WTC11 (cell line): ENCODE measurements at regions of chr15 and their contacts with region 1.

Region 1: GRCh38 chr15:73697033-73697467 is 12.9 kb downstream of the CD276 start:
- DNase-seq: peak; percentile 54
- ATAC-seq: peak; percentile 63
- H3K4me3 Mint-ChIP-seq: no peak overlapping the region
- H3K27ac Mint-ChIP-seq: peak overlapping the region; percentile 73
- H3K4me1 Mint-ChIP-seq: peaks cover 66% of the 10 kb centered on the region
- H3K27me3 Mint-ChIP-seq: no peaks in the 10 kb centered on the region
- CTCF ChIP-seq: no peak

Region 2: GRCh38 chr15:73555080-73555479 is 142.0 kb before region 1 on chr15:
- CTCF ChIA-PET with region 1: interaction called, 10 read pairs
- POLR2A ChIA-PET with region 1: no interaction called
- DNase-seq: no peak
- ATAC-seq: peak; percentile 51; the same call in 1 of the 2 replicates
- H3K4me3 Mint-ChIP-seq: no peak overlapping the region
- H3K27ac Mint-ChIP-seq: no peak overlapping the region
- H3K4me1 Mint-ChIP-seq: peaks cover 31% of the 10 kb centered on the region
- H3K27me3 Mint-ChIP-seq: no peaks in the 10 kb centered on the region
- CTCF ChIP-seq: no peak

Region 3: DNA sequence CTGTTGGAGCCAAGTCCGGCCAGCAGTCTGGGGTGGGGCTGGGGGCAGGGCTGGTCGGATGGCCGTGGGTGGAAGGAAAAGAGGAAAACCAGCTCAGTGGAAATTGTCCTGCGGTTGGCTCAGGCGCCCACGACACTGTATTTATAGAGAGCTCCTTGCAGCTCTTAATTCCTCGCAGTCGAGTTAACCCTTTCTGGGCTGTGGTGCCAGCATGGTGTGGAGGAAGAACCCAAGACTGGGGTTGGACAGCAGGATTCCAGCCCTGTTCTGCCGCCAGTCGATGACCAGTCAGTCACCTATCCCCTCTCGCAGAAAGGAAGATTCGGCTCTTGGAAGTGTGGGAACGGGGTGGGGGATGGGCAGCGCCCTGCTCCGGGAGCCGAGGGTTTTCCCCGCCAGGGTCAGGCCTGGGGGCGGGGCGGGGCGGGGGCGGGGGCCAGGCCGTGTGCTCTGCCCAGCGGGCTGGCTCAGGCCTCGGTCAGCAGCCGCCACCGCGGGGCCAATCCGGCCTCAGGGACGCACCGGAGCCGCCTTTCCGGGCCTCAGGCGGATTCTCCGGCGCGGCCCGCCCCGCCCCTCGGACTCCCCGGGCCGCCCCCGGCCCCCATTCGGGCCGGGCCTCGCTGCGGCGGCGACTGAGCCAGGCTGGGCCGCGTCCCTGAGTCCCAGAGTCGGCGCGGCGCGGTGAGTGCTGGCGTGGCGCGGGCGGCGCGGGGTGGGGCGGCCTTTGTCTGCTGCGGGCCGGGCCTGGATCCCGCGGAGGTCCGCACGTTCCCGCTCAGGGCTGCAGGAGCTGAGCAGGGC is 13.1 kb before region 1 on chr15 and contains the start of gene CD276:
- CTCF ChIA-PET with region 1: interaction called, 98 read pairs
- POLR2A ChIA-PET with region 1: interaction called, 3 read pairs
- DNase-seq: peak; percentile 80
- ATAC-seq: peak; percentile 72
- H3K4me3 Mint-ChIP-seq: peak within 1 kb of the TSS; percentile 81
- H3K27ac Mint-ChIP-seq: peak within 1 kb of the TSS; percentile 85
- H3K4me1 Mint-ChIP-seq: peaks cover 35% of the 10 kb centered on the region
- H3K27me3 Mint-ChIP-seq: no peaks in the 10 kb centered on the region
- CTCF ChIP-seq: no peak
- total RNA-seq, gene CD276: 146 to 153 TPM (median 150 TPM) in 3 replicates